Activated CD4-positive, alpha-beta memory T cell treated with anti-CD3 and anti-CD28 coated beads for 36 hours (primary cell): ENCODE measurements at regions of chr15 and their contacts with region 1.

Region 1: DNA sequence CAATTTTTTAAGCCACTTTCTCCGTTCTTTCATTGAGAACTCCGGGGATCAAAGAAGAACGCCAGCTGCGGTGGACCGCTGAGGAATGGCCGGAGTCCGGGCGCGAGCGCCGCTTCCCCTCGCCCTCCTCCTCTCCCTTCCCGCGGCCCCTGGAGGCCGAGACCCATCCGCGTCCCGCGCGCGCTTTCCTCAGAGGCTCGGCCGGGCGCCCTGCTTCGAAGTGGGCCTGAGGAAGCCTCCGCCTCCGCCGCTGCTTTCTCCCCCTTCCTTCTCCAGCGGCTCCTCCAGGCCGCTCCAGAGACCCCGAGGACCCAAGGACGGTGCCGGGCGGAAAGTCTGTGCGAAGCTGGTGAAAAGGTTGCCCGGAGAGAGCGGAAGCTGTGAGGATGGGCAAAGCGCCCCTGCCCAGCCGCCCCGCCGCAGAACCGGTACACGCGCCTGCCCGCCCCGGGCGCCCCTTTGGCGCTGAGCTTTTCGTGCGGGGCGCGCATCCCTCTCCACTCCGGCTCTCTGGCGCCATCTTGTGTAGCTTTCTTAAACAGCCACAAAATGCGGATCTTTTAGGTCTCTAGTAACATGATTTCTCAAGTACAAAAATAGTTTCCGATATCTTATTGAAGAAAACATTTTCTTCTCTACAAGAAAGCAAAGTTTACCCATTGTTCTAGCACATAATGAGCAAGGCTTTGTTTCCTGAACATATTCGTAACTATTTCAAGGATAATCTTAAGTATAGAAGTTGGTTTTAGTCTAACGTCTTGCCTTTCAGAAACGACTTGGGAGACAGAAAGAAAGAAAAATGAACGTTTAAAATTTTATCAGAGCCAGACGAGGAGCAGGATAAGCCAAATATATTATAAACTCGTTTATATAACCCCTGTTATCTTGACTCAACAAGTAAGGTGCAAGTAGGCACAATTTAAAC is 59.2 kb upstream of the FAM174B start:
- DNase-seq: peak; percentile 82
- H3K4me3 Mint-ChIP-seq: peak overlapping the region; percentile 38
- H3K27ac Mint-ChIP-seq: no peak overlapping the region
- H3K4me1 Mint-ChIP-seq: peaks cover 6% of the 10 kb centered on the region
- H3K27me3 Mint-ChIP-seq: peaks cover 22% of the 10 kb centered on the region

Region 2: DNA sequence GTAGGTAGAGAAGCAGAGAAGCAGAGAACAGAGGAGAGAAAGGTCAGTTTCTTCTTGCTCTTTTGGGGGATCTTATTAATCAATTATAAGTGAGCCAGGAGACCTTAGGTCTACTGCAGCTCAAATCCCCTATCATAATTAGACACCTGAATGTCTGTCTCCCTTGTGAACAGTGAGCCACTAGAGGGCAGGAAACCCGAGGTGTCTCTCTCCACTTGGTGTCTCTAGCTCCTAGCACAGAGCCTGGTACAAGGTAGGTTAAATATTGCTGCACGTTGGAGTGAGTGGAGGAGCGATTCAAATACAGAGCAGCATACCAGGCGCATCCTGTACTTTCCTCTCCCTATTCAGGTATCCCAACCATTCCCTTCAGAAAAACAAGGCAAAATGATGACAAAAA is 323.1 kb before region 1 on chr15:
- CTCF ChIA-PET with region 1: interaction called, 8 read pairs
- POLR2A ChIA-PET with region 1: no interaction called
- intact Hi-C with region 1: loop called (anchors 5 kb)
- DNase-seq: peak; percentile 39
- H3K4me3 Mint-ChIP-seq: no peak overlapping the region
- H3K27ac Mint-ChIP-seq: no peak overlapping the region
- H3K4me1 Mint-ChIP-seq: peaks cover 10% of the 10 kb centered on the region
- H3K27me3 Mint-ChIP-seq: peaks cover 72% of the 10 kb centered on the region

Region 3: DNA sequence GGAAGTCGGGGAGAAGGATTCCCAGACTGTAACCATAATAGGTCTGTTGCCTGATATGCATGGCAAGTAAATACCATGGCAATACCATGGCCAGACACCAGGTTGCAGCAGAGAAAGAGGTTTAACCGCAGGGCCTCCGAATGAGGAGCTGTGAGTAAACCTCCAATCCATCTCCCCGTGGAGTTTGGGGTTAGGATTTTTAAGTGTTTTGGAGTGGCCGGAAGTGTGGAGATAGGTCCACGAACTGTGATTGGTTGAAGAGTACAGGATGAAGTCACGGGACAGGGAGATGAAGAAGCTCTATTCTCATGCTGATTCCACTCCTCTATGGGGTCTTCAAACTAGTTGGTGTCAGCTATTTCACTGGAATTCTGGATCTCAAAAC is 193.1 kb before region 1 on chr15:
- CTCF ChIA-PET with region 1: interaction called, 77 read pairs
- POLR2A ChIA-PET with region 1: no interaction called
- intact Hi-C with region 1: loop called (anchors 1 kb)
- DNase-seq: peak; percentile 73
- H3K4me3 Mint-ChIP-seq: no peak overlapping the region
- H3K27ac Mint-ChIP-seq: no peak overlapping the region
- H3K4me1 Mint-ChIP-seq: peaks cover 6% of the 10 kb centered on the region
- H3K27me3 Mint-ChIP-seq: no peaks in the 10 kb centered on the region

Region 4: GRCh38 chr15:92611993-92612745 is 102.6 kb before region 1 on chr15:
- CTCF ChIA-PET with region 1: interaction called, 30 read pairs
- POLR2A ChIA-PET with region 1: no interaction called
- intact Hi-C with region 1: loop called (anchors 1 kb)
- DNase-seq: peak; percentile 18
- H3K4me3 Mint-ChIP-seq: no peak overlapping the region
- H3K27ac Mint-ChIP-seq: no peak overlapping the region
- H3K4me1 Mint-ChIP-seq: no peaks in the 10 kb centered on the region
- H3K27me3 Mint-ChIP-seq: peaks cover 2% of the 10 kb centered on the region